Calu3 (cell line): ENCODE measurements at regions of chr4 and their contacts with region 1.

Region 1: GRCh38 chr4:40840985-40841571 is 91.3 kb downstream of the NSUN7 start:
- DNase-seq: peak; percentile 72
- H3K4me3 Mint-ChIP-seq: no peak overlapping the region
- H3K27ac Mint-ChIP-seq: no peak overlapping the region
- H3K4me1 Mint-ChIP-seq: peaks cover 8% of the 10 kb centered on the region
- H3K27me3 Mint-ChIP-seq: no peaks in the 10 kb centered on the region
- CTCF ChIP-seq: peak; percentile 65

Region 2: GRCh38 chr4:40736910-40737309 is 104.2 kb before region 1 on chr4:
- CTCF ChIA-PET with region 1: no interaction called
- intact Hi-C with region 1: loop called (anchors 5 kb)
- DNase-seq: no peak
- H3K4me3 Mint-ChIP-seq: no peak overlapping the region
- H3K27ac Mint-ChIP-seq: no peak overlapping the region
- H3K4me1 Mint-ChIP-seq: peaks cover 2% of the 10 kb centered on the region
- H3K27me3 Mint-ChIP-seq: no peaks in the 10 kb centered on the region
- CTCF ChIP-seq: no peak

Region 3: DNA sequence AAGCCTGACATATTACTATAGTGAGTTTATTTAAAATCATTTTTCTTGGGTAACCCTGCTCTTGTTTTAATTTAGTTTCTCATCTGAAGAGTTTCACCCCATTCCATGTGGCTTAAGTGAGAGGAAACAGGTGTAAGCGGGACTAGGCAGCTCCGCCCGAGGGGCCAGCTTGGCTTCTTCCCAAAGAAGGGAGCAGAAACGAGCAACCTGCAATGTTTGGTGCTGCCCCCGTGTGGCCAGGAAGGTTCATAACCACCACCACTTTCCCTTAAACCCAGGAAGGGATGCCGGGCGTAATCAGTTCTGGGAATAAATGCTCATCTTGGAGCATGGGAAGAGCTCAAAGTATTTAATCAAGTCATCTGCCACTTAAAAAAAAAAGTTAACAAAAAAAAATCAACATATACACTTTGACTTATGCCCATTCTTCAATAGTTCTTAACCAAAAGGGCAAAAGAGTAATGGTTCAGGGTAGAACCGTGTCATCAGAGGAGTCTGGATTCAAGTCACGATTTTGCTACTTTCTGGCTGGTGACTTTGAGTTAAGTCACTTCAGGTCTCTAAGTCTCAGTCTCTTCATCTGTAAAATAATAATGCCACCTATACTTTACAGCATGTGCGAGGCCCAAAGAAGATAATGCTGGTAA is 56.6 kb after region 1 on chr4:
- CTCF ChIA-PET with region 1: interaction called, 11 read pairs
- intact Hi-C with region 1: no loop called
- DNase-seq: peak; percentile 70
- H3K4me3 Mint-ChIP-seq: peak overlapping the region; percentile 32
- H3K27ac Mint-ChIP-seq: no peak overlapping the region
- H3K4me1 Mint-ChIP-seq: no peaks in the 10 kb centered on the region
- H3K27me3 Mint-ChIP-seq: no peaks in the 10 kb centered on the region
- CTCF ChIP-seq: peak; percentile 38